ENCODE measurements at regions of chr7 and their contacts with region 1.

Region 1: DNA sequence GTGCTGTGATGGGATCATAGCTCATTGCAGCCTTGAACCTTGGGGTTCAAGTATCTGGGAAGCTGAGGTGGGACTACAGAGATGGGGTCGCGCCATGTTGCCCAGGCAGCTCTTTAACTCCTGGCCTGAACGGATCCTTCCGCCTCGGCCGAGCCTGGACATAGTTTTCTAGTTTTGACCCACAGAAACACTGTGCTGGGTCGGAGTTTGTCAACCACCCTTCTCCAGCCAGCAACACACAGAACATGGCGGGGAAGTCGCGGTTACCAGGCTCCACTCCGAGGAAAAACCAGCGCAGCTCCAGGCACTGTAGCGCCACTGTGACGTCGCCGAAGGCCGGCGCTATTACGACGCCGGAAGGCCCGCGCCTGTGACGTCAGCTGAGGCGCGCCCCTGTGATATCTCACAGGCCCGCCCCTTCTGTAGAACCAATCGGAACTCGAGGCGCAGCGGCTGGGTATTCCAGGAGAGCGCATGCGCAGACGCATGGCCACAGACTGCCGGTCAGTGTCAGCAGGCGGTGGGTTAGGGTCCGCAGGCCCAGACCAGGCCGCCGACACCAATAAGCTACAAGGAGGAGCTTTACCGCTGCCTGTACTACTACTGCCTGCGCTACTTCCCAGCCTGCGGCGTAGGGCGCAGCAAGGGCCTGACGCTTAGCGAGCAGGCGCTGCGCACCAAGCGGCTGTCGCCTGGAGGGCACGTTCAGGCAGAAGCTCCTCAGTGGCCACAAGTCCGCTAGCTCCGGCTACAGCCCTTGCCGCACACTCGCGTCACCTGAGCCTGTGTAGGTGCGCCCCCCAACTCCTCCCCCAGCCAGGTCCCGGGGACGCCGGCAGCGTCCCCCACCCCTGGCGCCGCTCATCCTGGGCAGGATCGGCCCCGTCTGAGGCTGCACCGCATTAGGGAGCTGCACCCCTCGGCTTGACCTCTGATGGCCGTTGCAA is 135.2 kb upstream of the KCTD7 start:
- DNase-seq: peak; percentile 94 to 98 (median 97)
- ATAC-seq: peak; percentile 97
- H3K4me3 ChIP-seq: peak overlapping the region; percentile 89
- H3K4me3 Mint-ChIP-seq: peak overlapping the region; percentile 84 to 96 (median 94)
- H3K27ac ChIP-seq: peak overlapping the region; percentile 92
- H3K27ac Mint-ChIP-seq: peak overlapping the region; percentile 95 to 100 (median 98)
- H3K4me1 ChIP-seq: peaks cover 4 to 8% of the 10 kb centered on the region in 2 donors
- H3K4me1 Mint-ChIP-seq: peaks cover 0 to 32% (median 17%) of the 10 kb centered on the region in 7 donors
- H3K27me3 ChIP-seq: no peaks in the 10 kb centered on the region
- H3K27me3 Mint-ChIP-seq: no peaks in the 10 kb centered on the region

Region 2: GRCh38 chr7:65750511-65751344 is 742.8 kb before region 1 on chr7:
- CTCF ChIA-PET with region 1: no interaction called
- POLR2A ChIA-PET with region 1: interaction called, 7 read pairs
- intact Hi-C with region 1: loop called (anchors 2 kb)
- DNase-seq: peak; percentile 76 to 91 (median 80)
- ATAC-seq: peak; percentile 99
- H3K4me3 ChIP-seq: peak overlapping the region; percentile 97
- H3K4me3 Mint-ChIP-seq: peak overlapping the region; percentile 90 to 100 (median 98)
- H3K27ac ChIP-seq: peak overlapping the region; percentile 85
- H3K27ac Mint-ChIP-seq: peak overlapping the region; percentile 75 to 95 (median 87)
- H3K4me1 ChIP-seq: peaks cover 6 to 7% of the 10 kb centered on the region in 2 donors
- H3K4me1 Mint-ChIP-seq: peaks cover 0 to 35% (median 20%) of the 10 kb centered on the region in 7 donors
- H3K27me3 ChIP-seq: no peaks in the 10 kb centered on the region
- H3K27me3 Mint-ChIP-seq: no peaks in the 10 kb centered on the region

Region 3: GRCh38 chr7:66075590-66076461 is 417.7 kb before region 1 on chr7 and contains the start of gene ASL:
- CTCF ChIA-PET with region 1: no interaction called
- POLR2A ChIA-PET with region 1: interaction called, 3 read pairs
- intact Hi-C with region 1: loop called in 1 of 2 experiments (anchors 2 kb)
- DNase-seq: peak; percentile 71 to 96 (median 78)
- ATAC-seq: peak; percentile 99
- H3K4me3 ChIP-seq: peak within 1 kb of the TSS; percentile 83
- H3K4me3 Mint-ChIP-seq: peak within 1 kb of the TSS; percentile 80 to 96 (median 87)
- H3K27ac ChIP-seq: peak within 1 kb of the TSS; percentile 69
- H3K27ac Mint-ChIP-seq: peak within 1 kb of the TSS in 8 of 9 donors; percentile 42 to 89 (median 77)
- H3K4me1 ChIP-seq: peaks cover 6 to 7% of the 10 kb centered on the region in 2 donors
- H3K4me1 Mint-ChIP-seq: peaks cover 5 to 20% (median 19%) of the 10 kb centered on the region in 7 donors
- H3K27me3 ChIP-seq: no peaks in the 10 kb centered on the region
- H3K27me3 Mint-ChIP-seq: peaks cover 0 to 2% (median 0%) of the 10 kb centered on the region in 5 donors
- total RNA-seq, gene ASL: 11.3 to 29.7 (median 12.8) TPM

Region 4: DNA sequence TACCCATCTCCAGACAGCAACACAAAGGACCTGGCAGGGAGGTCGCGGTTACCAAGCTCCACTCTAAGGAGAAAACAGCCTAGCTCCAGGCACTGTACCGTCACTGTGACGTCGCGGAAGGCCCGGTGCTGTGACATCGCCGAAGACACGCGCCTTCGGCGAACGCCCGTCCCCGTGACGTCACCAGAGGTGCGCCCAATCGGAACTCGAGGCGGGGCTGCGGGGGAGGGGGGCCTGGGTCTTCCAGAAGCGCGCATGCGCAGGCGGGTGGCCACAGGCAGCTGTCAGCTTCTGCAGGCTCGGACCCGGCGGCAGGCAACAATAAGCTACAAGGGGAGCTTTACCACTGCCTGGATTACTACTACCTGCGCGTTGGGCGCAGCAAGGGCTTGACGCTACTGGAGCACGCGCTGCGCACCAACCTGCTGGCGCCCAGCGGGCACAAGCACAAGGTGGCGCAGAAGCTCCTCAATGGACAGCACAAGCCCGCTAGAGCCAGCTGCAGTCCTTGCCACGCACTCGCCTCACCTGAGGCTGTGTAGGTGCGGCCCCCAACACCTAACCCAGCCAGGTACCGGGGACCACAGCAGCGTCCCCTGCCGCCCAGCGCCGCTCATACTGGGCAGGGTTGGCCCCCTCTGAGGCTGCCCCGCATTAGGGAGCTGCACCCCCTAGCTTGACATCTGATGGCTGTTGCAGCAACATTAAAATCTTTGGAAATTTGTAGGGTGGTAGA is 80.0 kb before region 1 on chr7:
- CTCF ChIA-PET with region 1: no interaction called
- POLR2A ChIA-PET with region 1: interaction called, 5 read pairs
- intact Hi-C with region 1: loop called (anchors 1 kb)
- DNase-seq: peak; percentile 78 to 92 (median 82)
- ATAC-seq: peak; percentile 94
- H3K4me3 ChIP-seq: peak overlapping the region; percentile 74
- H3K4me3 Mint-ChIP-seq: peak overlapping the region; percentile 63 to 82 (median 80)
- H3K27ac ChIP-seq: peak overlapping the region; percentile 37
- H3K27ac Mint-ChIP-seq: peak overlapping the region; percentile 38 to 95 (median 90)
- H3K4me1 ChIP-seq: peaks cover 0 to 6% of the 10 kb centered on the region in 2 donors
- H3K4me1 Mint-ChIP-seq: peaks cover 0 to 22% (median 10%) of the 10 kb centered on the region in 7 donors
- H3K27me3 ChIP-seq: no peaks in the 10 kb centered on the region
- H3K27me3 Mint-ChIP-seq: no peaks in the 10 kb centered on the region

Region 5: DNA sequence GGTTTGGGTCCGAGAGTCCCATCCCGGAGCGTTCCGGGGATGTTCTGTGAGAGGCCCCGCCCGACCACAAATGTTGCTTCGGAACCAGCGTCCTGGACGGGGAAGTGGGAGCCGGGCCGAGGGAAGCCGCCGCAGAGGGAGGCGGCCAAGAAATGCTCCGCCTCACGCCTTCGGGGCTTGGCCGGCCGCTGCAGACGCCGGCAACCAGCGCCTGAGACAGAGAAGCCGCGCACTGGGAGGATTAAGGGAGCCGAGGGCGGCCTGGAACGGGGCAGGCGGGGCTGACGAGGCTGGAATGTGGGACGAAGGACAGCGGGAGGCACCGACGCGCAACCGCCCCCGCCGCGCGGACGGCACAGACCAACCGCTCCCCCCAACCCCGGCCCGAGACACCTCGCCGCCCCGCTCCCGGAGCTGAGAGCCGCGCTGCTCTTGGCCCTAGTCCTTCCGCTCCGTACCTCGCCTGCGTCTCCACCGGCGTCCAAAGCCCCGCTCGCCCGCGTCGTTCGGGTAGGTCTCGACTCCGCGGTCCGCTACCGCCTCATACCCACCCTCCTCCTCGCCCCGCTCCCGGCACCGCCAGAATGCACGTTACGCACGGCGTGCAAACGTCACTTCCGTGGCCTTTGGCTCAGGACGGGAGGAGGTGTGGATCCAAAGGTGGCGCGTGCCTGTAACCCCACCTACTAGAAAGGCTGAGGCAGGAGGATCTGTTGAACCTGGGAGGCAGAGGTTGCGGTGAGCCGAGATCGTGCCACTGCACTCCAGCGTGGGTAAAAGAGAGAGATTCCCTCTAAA is 98.5 kb after region 1 on chr7:
- CTCF ChIA-PET with region 1: no interaction called
- POLR2A ChIA-PET with region 1: no interaction called
- intact Hi-C with region 1: loop called (anchors 1 to 2 kb)
- DNase-seq: peak; percentile 65 to 90 (median 88)
- ATAC-seq: peak; percentile 98
- H3K4me3 ChIP-seq: peak overlapping the region; percentile 88
- H3K4me3 Mint-ChIP-seq: peak overlapping the region; percentile 95 to 99 (median 98)
- H3K27ac ChIP-seq: peak overlapping the region; percentile 82
- H3K27ac Mint-ChIP-seq: peak overlapping the region; percentile 88 to 99 (median 97)
- H3K4me1 ChIP-seq: peaks cover 8 to 16% of the 10 kb centered on the region in 2 donors
- H3K4me1 Mint-ChIP-seq: peaks cover 33 to 69% (median 53%) of the 10 kb centered on the region in 7 donors
- H3K27me3 ChIP-seq: no peaks in the 10 kb centered on the region
- H3K27me3 Mint-ChIP-seq: no peaks in the 10 kb centered on the region

Region 6: GRCh38 chr7:66681491-66682349 is 188.2 kb after region 1 on chr7:
- CTCF ChIA-PET with region 1: no interaction called
- POLR2A ChIA-PET with region 1: interaction called, 4 read pairs
- intact Hi-C with region 1: loop called (anchors 1 kb)
- DNase-seq: peak; percentile 92 to 97 (median 95)
- ATAC-seq: peak; percentile 98
- H3K4me3 ChIP-seq: peak overlapping the region; percentile 96
- H3K4me3 Mint-ChIP-seq: peak overlapping the region; percentile 82 to 96 (median 92)
- H3K27ac ChIP-seq: peak overlapping the region; percentile 95
- H3K27ac Mint-ChIP-seq: peak overlapping the region; percentile 86 to 98 (median 97)
- H3K4me1 ChIP-seq: peaks cover 5 to 11% of the 10 kb centered on the region in 2 donors
- H3K4me1 Mint-ChIP-seq: peaks cover 7 to 59% (median 31%) of the 10 kb centered on the region in 7 donors
- H3K27me3 ChIP-seq: no peaks in the 10 kb centered on the region
- H3K27me3 Mint-ChIP-seq: no peaks in the 10 kb centered on the region

Region 7: DNA sequence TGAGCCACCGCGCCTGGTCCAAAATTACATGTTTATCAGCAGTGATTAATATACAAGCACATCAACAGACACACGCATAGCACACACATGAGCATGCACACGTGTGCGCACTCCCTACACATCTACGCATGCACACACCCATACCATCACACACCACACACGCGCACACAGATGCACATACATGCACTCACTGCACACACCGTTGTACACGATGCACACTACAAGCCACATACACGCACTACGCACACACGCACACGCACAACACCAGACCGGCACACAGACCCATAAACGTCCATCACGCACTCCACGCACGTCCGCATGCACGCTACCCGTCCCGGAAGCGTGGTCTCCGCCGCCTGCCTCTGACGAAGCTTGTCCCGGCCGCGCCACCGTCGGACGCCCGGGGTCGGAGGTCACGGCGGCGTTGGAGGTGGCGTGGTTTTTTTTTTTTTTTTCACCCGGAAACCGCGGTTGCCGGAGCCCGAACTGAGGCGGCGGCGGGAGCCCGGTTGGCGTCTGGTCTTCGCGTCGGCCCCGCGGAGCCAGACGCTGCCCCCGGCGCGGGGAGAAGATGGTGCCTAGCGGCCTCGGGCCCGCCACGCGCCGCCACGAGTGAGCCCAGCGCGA is 427.4 kb after region 1 on chr7 and contains the start of gene TMEM248:
- CTCF ChIA-PET with region 1: no interaction called
- POLR2A ChIA-PET with region 1: interaction called, 8 read pairs
- intact Hi-C with region 1: loop called (anchors 1 kb)
- DNase-seq: peak; percentile 87 to 97 (median 94)
- ATAC-seq: peak; percentile 95
- H3K4me3 ChIP-seq: peak within 1 kb of the TSS; percentile 80
- H3K4me3 Mint-ChIP-seq: peak within 1 kb of the TSS; percentile 91 to 100 (median 98)
- H3K27ac ChIP-seq: peak within 1 kb of the TSS; percentile 93
- H3K27ac Mint-ChIP-seq: peak within 1 kb of the TSS; percentile 96 to 100 (median 98)
- H3K4me1 ChIP-seq: peaks cover 18 to 20% of the 10 kb centered on the region in 2 donors
- H3K4me1 Mint-ChIP-seq: peaks cover 14 to 49% (median 37%) of the 10 kb centered on the region in 7 donors
- H3K27me3 ChIP-seq: no peaks in the 10 kb centered on the region
- H3K27me3 Mint-ChIP-seq: no peaks in the 10 kb centered on the region
- total RNA-seq, gene TMEM248: 81.0 to 107 (median 91.6) TPM